ENCODE measurements at regions of chr18 and their contacts with region 1.

Region 1: DNA sequence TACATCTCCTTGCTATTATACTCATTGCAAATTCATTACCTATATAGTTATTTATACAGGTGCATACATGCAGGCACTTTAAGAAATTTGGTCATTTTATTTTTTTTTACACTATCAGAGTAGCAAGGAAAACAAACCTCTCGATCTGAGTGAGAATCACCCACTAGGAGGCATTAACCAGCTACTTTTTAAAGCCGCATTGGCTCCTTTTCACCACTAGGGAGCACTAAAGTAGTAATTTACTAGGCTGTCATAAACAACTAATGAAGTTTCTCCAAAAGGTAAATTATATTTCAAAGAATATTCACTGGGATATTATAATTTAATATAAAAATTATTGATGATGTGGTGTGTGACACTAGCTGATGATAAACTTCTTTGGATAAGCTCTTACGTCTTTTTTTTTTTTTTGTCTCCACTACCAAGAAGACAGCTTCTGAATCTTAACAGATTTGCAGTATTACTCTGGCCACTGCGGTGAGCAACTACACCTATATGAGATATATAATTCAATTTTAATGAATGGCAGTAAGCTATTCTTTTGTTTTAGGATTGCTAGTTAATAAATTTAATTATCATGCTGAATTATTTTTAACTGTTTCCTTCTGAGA is 101.9 kb downstream of the NOL4 start:
- DNase-seq: no peak
- ATAC-seq: peak; percentile 36

Region 2: DNA sequence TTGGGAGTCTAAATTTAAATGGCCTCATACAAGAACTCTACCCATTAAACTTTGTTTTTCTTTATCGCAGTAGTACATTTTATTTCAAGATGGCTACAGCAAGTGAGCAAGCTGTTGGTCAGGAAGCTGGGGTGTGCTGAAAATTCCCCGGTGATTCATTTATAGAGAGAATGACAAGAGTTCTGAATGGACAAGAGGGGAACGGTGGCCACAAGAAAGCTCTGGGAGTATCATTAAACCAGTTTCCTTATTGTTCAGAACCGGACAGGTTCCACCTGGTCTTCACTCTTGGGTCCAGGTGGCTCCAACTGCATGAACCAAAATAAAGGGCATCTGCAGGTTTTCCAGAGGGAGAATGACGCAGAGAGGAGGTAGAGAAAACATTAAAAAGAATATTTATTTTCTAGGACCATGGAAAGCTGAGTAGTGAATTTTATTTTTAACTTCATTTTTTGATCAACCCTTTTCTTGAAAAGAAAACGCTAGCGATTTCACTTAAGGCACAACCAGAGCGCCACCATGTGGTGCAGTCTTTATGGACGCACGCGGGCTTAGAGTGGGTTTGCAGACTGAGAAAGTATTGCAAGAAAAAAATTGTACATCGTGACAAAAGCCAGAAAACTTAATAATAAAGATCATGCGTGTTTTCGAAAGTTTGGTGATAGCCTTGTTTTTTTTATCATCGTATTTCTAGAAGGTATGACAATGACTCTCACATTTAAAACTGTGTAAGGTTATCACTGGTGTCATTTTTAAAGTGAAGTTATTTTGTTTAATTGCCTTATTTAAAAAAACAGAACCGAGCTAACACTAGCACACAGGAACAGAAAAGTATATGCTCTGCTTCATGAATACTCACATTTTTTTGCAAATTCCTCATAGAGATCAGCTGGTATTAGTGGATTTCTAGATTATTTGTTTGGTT is 199.8 kb after region 1 on chr18:
- intact Hi-C with region 1: loop called (anchors 10 kb)
- DNase-seq: peak; percentile 41
- ATAC-seq: no peak

Measured in left ventricle myocardium superior (tissue), 1 donor.